Right ventricle myocardium inferior (tissue), 1 donor: ENCODE measurements at regions of chr14 and their contacts with region 1.

Region 1: DNA sequence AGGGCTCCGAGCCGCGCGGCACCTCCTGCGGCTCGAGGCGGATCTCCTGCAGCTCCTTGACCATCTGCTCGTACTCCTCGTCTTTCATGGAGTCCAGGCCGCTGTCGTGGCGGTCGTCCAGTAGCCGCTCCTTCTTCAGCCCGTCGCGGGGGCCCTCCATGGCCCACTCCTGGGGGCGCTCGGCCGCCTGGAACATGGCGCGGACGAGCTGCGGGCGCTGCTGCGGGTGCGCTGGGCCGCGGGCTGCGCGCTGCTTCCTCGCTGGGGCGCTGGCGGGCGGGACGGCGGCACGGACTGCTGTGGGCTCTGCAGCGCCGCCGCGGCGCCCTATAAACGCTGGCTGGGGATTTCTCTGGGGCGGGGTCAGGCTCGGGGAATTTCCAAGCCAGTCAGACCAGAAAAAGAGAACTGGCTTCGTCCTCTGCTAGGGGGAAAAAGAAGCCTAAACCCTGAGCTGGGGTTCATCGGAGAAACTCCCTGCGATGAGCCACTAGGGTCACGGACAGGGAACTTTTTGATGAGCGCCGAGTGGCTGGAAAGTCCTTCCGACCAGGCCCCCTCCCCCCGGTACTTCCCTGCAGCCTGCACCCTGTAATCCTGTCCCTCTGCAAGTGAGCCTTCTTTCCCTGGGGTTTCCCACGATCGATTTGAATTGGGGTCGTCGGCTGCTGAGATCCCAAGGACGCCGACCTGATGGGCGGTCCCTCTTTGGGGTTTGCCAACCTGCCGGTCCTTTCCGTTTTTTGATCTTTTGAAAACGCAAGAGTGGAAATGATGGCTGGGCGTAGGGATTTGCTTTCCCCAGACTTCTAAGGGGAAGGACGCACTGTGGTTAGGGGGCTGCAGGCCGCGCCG is at the start of gene NFKBIA:
- DNase-seq: peak; percentile 97
- ATAC-seq: peak; percentile 77
- total RNA-seq, gene NFKBIA: 83.0 TPM

Region 2: GRCh38 chr14:35121887-35122695 is 282.6 kb before region 1 on chr14 and contains the starts of genes PPP2R3C and PRORP:
- intact Hi-C with region 1: loop called (anchors 5 kb)
- DNase-seq: peak; percentile 96
- ATAC-seq: peak; percentile 97
- total RNA-seq, gene PPP2R3C: 26.8 TPM
- total RNA-seq, gene PRORP: 22.0 TPM

Region 3: DNA sequence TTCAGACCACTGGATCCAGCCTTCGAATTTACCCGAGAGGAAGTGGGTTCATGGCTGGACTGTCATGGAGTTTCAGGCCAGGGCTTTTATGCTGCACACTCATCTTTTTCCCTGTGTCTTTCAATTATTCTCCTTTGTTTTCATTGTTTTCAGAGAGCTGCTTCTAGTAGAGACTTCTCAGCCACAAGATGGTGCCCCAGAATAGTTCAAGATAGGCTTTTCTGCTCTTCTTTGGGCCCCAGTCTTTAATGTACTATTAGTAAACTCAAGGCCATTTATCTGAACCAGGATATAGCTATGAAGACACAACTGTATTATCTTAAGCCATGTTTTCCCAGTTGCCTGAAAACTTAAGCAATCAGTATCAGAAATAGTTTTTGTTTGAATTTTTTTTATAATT is 142.9 kb before region 1 on chr14:
- intact Hi-C with region 1: loop called (anchors 2 kb)
- DNase-seq: no peak
- ATAC-seq: no peak

Region 4: GRCh38 chr14:35292051-35292769 is 112.5 kb before region 1 on chr14 and contains the start of gene PSMA6:
- intact Hi-C with region 1: loop called (anchors 1 kb)
- DNase-seq: peak; percentile 100
- ATAC-seq: peak; percentile 100
- total RNA-seq, gene PSMA6: 195 TPM

Region 5: DNA sequence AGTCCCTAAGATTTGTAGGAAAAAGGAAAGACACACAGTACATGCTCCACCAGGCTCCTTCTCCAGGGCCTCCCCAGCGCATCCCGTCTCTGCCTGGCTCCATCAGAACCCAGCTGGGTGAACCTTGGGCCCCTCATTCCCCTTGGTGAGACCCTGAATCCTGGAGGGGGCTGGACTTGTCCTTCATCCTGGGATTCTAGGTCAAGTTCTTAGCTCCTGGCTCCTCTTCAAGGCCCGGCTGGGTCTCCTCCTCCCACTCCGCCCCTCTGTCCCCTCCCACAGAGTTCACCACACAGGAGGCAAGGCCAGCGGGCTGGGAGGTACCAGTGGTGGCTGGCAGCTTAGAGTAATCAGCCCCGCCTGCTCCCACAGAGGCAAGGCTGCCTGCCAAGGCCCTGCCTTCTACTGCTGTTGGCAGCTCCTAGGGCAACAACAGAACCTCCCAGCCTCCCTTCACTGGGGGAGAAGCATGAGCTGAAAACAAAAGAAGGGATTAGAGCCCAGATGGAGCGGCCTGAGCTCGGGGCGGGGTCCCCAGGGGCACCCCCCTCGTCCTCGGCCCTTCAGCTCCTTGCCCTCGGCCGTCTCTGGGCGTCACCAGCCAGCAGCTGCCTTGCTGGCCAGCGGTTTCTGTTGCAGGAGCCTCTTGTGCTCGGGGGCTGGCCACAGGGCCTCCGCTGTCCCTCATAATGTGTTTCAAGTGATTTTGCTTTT is 63.1 kb before region 1 on chr14:
- intact Hi-C with region 1: loop called (anchors 1 kb)
- DNase-seq: peak; percentile 98
- ATAC-seq: peak; percentile 92

Region 6: GRCh38 chr14:35385042-35385839 is 19.4 kb before region 1 on chr14:
- intact Hi-C with region 1: loop called (anchors 1 kb)
- DNase-seq: peak; percentile 84
- ATAC-seq: peak; percentile 94